PC-9 (cell line): ENCODE measurements at regions of chr1 and their contacts with region 1.

Region 1: DNA sequence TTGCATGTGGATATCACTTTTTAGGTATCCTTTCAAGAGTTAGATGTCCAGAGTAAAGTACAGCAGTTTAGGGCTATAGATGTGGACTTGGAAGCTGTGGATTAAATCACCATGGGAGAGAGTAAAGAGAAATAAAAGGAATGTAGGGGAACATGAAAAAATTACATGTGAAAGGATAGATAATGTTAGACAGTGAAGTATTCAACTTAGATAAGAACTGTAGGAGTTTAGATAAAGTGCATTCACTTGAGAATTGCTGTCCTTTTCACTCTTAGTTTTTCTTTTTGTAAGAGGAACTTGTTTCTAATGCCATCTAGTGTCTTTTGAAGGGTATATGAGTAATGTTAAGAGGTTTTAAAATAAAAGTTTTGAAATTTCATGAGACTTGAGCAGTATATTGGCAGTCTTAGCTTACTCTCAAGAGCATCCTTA is 40.1 kb downstream of the MAST2 start:
- DNase-seq: no peak
- H3K4me3 ChIP-seq: no peak overlapping the region
- H3K27ac ChIP-seq: no peak overlapping the region
- H3K4me1 ChIP-seq: no peaks in the 10 kb centered on the region
- H3K27me3 ChIP-seq: no peaks in the 10 kb centered on the region
- CTCF ChIP-seq: peak; percentile 48; the same call in 1 of the 2 replicates

Region 2: DNA sequence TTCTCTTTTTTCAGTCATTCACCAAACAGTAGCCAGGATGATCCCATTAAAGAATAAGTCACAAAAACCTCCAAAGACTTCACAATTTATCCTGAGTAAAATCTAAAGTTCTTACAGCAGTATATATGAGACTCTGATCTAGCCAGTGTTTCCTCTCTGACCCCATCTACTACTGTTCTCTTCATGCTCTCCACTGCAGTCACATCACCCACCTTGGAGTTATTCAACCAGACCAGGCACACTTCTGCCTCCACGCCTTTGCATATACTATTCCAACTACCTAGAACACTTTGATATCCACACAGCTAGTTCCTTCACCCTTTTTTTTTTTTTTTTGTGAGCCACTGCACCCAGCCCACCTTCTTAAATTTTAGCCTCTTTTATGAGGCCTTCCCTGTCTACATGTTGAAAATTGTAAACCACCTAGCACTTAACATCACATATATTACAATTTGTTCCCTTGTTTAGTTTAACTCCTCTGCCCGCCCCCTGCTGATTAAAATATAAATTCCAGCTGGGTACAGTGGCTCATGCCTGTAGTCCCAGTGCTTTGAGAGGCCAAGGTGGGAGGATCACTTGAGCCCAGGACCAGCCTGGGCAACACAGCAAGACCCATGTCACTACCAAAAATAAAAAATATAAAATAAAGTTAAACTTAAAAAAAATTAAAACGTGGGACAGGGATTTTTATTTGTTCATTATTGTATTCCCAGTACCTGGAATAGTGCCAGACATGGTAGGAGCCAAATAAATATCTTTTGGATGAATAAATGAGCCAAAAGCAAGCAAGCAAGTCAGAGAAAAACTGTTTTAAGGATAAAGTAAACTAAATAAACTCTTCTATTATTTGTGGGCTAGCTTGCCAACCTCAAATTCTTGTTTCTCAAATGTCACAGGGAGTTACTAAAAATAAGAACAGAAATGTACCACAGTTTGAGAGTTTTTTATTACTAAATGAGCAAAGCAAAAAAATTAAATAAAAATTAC is 468.1 kb before region 1 on chr1:
- CTCF ChIA-PET with region 1: no interaction called
- POLR2A ChIA-PET with region 1: no interaction called
- intact Hi-C with region 1: no loop called
- DNase-seq: no peak
- H3K4me3 ChIP-seq: no peak overlapping the region
- H3K27ac ChIP-seq: no peak overlapping the region
- H3K4me1 ChIP-seq: no peaks in the 10 kb centered on the region
- H3K27me3 ChIP-seq: no peaks in the 10 kb centered on the region
- CTCF ChIP-seq: no peak; the same call in 1 of the 2 replicates

Region 3: DNA sequence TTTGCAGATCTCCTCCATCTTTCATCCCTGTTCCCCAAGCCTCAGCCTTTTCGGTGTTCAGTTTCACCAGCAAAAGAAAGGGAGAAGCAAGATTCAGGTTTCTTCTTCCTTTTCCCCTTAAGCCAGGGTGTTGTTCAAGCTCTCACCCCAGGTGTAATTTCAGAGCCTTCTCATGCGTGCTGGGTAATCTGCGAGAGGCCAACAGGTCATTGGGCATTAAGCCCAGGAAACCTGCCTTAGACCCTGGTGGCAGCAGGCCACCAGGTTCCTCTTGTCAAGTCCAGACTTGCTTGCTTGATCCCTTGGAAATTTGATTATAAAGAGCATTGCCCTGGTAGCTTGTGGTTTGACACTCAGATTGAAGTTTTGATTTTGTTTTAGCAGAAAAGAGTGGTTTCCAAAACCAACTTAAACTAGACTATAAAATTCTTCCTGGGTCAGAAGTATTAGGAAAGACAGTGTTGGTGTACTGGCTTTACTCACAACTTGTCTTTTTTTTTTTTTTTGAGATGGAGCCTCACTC is 286.0 kb before region 1 on chr1:
- CTCF ChIA-PET with region 1: no interaction called
- POLR2A ChIA-PET with region 1: interaction called, 10 read pairs
- intact Hi-C with region 1: no loop called
- DNase-seq: peak; percentile 59 to 86
- H3K4me3 ChIP-seq: no peak overlapping the region
- H3K27ac ChIP-seq: no peak overlapping the region
- H3K4me1 ChIP-seq: peaks cover 2% of the 10 kb centered on the region
- H3K27me3 ChIP-seq: no peaks in the 10 kb centered on the region
- CTCF ChIP-seq: no peak

Region 4: DNA sequence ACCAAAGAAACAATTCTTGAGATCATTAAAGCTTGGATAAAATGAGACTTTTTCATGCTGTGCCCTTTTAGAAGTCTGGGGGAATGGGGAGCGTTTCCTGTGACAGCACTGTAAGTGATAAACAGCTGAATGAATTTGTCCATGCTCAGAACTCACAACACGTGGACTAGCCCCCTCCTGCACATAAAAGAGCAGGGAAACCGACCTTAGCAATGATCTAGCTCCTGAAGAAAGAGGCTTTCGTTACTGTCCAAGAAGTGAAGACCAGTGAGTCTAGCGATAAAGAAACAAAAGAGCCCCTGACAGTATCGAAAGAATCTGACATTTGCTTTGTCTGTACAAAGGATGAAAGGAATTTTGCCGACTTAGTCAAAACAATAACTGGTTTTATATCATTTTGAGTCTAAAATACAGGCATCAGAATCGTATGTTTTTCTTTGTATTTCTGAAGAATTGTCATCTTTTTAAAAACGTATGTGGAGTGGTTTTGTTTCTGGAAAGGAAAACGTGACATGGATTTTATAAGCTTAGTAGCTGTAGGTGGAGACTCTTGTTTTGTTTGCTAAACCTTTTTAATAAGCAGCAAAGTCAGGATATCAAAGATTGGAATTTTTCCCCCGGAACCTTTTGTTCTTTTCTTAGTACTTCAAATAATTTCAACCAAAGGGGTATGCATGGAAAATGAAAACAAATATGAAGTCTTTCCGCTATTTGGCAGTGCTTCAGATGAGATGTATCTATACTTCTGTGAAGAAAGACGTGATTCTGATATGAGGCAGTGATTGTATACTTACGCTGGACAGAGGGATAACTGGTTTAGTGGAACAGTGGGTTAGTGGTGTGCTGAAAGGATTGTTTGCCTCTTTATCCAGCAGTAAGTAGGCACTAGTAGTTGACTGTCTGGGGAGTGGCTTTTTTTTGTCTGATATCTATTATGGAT is 20.9 kb after region 1 on chr1:
- CTCF ChIA-PET with region 1: interaction called, 11 read pairs
- POLR2A ChIA-PET with region 1: no interaction called
- intact Hi-C with region 1: no loop called
- DNase-seq: no peak
- H3K4me3 ChIP-seq: no peak overlapping the region
- H3K27ac ChIP-seq: no peak overlapping the region
- H3K4me1 ChIP-seq: peaks cover 12% of the 10 kb centered on the region
- H3K27me3 ChIP-seq: no peaks in the 10 kb centered on the region
- CTCF ChIP-seq: no peak